Heart left ventricle (tissue), 16 donors: ENCODE measurements at regions of chr3 and their contacts with region 1.

Region 1: GRCh38 chr3:32570421-32571191 is at the start of gene DYNC1LI1:
- DNase-seq: peak; percentile 96 to 98 (median 97)
- ATAC-seq: peak; percentile 96 to 98 (median 98)
- H3K4me3 ChIP-seq: peak within 1 kb of the TSS; percentile 65 to 99 (median 86)
- H3K27ac ChIP-seq: peak within 1 kb of the TSS; percentile 84 to 99 (median 98)
- H3K4me1 ChIP-seq: peaks cover 4 to 46% (median 32%) of the 10 kb centered on the region in 12 donors
- H3K27me3 ChIP-seq: no peaks in the 10 kb centered on the region
- CTCF ChIP-seq: no peak
- POLR2A ChIP-seq: peak; percentile 26 to 85
- total RNA-seq, gene DYNC1LI1: 40.8 to 65.0 (median 55.9) TPM

Region 2: GRCh38 chr3:32184187-32184730 is 386.3 kb before region 1 on chr3:
- intact Hi-C with region 1: no loop called
- DNase-seq: no peak
- ATAC-seq: no peak
- H3K4me3 ChIP-seq: no peak overlapping the region
- H3K27ac ChIP-seq: no peak overlapping the region
- H3K4me1 ChIP-seq: no peaks in the 10 kb centered on the region
- H3K27me3 ChIP-seq: no peaks in the 10 kb centered on the region
- CTCF ChIP-seq: no peak
- POLR2A ChIP-seq: no peak

Region 3: GRCh38 chr3:32401556-32402081 is 169.0 kb before region 1 on chr3:
- intact Hi-C with region 1: loop called in 1 of 10 experiments (anchors 10 kb)
- DNase-seq: peak; percentile 85 to 94 (median 86)
- ATAC-seq: peak; percentile 70 to 94 (median 90)
- H3K4me3 ChIP-seq: peak overlapping the region; percentile 2 to 61 (median 50)
- H3K27ac ChIP-seq: peak overlapping the region; percentile 70 to 97 (median 86)
- H3K4me1 ChIP-seq: peaks cover 0 to 93% (median 27%) of the 10 kb centered on the region in 12 donors
- H3K27me3 ChIP-seq: no peaks in the 10 kb centered on the region
- CTCF ChIP-seq: no peak
- POLR2A ChIP-seq: peak in 1 of 2 donors; percentile 25

Region 4: DNA sequence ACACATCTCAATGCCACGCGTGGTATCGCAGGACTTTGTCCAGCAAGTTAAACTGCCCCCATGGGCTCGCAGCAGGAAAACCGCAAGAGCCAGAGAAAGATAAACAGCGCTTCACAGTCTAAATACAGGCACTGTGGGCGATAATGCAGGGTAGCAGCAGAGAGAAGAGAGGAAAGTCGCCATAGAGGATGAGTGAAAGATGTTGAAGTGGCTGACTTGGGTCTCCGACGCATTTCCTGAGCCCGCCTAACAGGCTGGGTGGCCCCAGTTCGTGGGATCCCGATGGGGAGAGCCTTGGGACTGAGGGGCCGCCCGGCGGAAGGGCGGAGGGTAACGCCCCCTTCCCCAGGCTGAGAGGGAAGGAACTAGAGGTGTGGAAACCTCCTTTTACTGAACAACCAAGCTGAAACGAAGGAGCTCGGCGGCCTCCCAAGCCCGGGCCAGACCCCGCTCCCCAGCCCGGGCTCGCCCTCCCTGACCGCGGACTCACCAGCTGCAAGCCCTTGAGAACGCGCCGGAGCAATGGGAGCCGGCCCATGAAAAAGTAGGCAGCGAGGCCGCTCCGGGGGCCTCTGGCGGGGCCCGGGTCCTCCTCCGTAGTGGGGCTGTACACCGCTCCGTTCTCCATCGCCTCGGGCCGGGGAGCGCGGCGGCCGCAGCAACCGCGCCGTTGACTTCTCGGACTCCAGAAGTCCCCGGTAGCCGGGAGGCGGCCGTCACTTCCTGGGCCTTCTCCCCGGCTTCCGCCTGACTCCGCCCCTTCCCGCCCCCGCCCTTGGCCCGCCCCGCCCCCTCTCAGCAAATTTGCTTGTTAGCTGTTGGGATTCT is 68.3 kb before region 1 on chr3 and contains the start of gene CMTM6:
- intact Hi-C with region 1: loop called in 4 of 10 experiments (anchors 5 to 10 kb)
- DNase-seq: peak; percentile 87 to 91 (median 89)
- ATAC-seq: peak; percentile 69 to 96 (median 95)
- H3K4me3 ChIP-seq: peak within 1 kb of the TSS; percentile 43 to 99 (median 91)
- H3K27ac ChIP-seq: peak within 1 kb of the TSS; percentile 87 to 99 (median 98)
- H3K4me1 ChIP-seq: peaks cover 0 to 53% (median 14%) of the 10 kb centered on the region in 12 donors
- H3K27me3 ChIP-seq: no peaks in the 10 kb centered on the region
- CTCF ChIP-seq: no peak
- POLR2A ChIP-seq: peak; percentile 53 to 57
- total RNA-seq, gene CMTM6: 8.9 to 34.8 (median 12.5) TPM